ENCODE measurements at regions of chr12 and their contacts with region 1.

Region 1: DNA sequence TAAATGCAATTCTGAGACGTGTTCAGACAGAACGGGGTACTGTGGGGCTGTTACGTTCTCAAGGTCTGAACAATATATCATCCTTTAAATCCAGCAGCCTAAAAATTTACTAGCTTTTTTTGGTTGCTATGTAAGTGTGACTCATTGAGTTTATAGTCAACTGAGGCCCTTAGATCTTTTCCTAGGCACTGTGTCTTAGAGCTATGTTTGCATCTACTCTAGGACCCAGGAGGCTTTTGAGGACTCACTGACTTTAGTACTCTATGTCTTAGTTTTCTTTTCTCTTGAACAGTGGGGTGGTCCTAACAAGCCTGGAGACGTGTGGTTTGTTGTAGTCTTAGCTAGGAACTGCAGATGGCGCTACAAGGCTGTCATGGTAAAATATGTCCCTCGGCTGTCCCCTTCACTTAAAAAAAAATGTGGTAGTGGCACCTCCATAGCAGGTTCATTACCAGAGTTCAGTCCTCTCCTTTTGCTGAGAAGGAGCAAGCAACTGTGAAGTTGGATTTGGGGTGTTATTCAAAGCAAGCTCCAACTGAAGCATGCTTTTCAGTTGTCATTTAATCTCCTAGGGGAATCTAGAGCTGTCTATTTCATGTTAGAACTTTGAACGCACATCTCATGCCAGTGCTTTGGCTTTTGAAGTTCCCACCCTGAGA is 8.7 kb upstream of the SPATS2 start:
- H3K4me3 ChIP-seq: no peak overlapping the region
- H3K27ac ChIP-seq: no peak overlapping the region
- H3K4me1 ChIP-seq: no peaks in the 10 kb centered on the region
- CTCF ChIP-seq: peak; percentile 78

Region 2: DNA sequence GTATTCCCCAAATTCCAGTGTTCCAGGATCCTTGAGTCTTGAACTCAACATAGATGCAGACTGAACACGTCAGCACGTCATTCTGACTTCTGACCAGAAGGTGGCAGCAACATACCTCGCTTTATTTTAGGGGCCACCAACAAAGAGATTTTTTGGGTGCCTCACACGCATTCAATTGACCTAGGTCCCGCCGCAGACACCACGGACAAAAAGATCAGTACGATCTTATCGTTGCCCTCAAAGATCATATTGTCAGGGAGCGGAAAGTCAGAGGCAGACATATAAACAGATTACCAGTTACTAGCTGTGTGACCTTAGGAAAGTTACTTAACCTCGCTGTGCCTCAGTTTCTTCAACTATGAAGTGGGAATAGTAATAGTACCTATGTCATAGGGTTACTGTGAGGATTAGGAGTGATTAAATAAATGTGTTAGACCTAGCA is 70.2 kb before region 1 on chr12:
- CTCF ChIA-PET with region 1: interaction called, 112 read pairs
- POLR2A ChIA-PET with region 1: interaction called, 5 read pairs
- H3K4me3 ChIP-seq: no peak overlapping the region
- H3K27ac ChIP-seq: no peak overlapping the region
- H3K4me1 ChIP-seq: no peaks in the 10 kb centered on the region
- CTCF ChIP-seq: peak; percentile 89

Region 3: DNA sequence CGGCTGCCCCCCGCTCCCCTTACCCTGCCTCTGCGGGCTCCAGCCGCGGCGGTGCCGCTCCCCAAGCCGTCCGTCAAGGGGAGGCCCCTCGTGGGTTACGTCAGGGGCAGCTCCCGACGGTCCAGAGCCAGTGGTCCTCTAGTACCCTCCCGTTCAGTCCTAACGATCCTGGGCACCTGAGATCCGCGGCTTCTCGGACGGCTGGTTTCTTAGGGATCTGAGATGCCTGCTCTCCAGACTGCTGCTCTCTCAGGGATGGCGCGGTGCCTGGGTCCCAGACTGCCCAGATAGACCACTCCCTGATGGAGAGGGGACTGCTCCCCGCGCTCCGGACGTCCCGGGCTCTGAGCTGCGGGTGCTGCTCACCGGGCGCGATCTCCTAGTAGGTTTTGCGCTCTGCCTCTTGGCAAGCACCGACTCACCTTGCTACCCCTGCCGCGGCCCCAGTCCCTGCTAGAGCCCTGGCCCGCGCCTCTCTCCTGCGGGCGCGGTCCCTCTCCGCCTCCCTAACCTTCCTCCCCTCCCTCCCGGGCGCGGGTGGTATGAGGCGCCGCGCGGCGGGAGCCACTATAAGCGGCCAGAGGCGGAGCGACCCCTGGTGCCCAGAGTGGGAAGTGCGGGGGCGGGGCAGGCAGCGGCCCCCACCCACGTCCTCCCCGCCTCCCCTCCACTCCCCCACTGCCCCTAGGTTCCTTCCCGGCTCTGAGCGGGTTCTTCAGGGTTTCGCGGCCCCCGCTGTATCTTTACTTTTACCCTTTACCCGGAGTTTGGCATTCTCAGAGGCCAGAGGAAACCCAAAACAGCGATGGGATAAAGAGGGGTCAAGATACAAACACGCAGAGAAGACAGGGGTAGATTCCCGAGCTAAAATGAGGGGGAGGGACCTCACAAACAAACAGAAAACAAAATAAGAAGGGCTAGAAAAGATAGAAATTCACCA is 21.7 kb before region 1 on chr12 and contains the start of gene C1QL4:
- CTCF ChIA-PET with region 1: interaction called, 99 read pairs
- POLR2A ChIA-PET with region 1: interaction called, 7 read pairs
- H3K4me3 ChIP-seq: peak within 1 kb of the TSS; percentile 49
- H3K27ac ChIP-seq: no peak within 1 kb of the TSS; the same call in 1 of the 2 replicates
- H3K4me1 ChIP-seq: peaks cover 9% of the 10 kb centered on the region; the same call in 1 of the 2 replicates
- CTCF ChIP-seq: peak; percentile 85

Region 4: DNA sequence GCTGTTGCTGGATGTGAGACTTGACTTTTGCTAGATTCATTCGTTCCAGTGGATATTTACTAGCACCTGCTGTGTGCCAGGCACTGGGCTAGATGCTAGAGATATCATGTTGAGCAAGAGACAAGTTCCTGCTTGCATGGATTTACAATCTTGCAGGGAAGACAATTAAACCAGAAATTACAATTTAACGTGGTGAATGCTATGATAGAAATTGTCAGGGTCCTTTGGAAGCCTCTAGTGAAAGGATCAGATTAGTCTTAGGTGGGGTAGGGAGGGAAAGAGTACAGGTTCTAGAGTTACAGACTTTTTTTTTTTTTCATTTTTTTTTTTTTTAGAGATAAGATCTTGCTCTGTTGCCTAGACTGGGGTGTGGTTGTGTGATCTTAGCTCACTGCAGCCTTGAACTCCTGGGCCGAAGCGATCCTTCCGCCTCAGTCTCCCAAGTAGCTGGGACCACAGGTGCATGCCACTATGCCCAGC is 45.4 kb after region 1 on chr12:
- CTCF ChIA-PET with region 1: interaction called, 11 read pairs
- POLR2A ChIA-PET with region 1: no interaction called
- H3K4me3 ChIP-seq: no peak overlapping the region
- H3K27ac ChIP-seq: no peak overlapping the region
- H3K4me1 ChIP-seq: no peaks in the 10 kb centered on the region
- CTCF ChIP-seq: no peak

Region 5: DNA sequence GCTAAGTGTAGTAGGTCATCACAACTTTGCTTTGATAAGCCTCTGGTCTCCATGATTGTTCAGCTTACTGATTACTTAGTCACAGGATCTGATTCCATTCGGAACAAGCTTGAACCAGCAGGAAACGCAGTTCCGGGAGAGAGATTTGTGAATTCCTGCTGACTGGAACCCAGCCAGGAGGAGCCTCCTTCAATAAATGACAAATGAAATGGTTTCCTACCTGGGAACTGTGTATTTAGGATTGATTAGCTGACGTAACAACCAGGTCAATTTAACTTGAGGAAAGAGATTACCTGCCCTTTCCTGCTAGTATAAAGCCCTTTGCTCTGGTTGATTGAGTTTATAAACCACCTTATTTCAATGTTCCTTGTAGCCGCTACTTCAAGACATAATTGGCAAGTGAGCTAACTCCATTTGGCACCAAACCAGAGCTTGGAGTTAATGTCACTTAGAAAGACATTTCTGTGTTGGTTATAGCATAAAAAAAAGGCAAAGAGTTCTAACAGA is 145.1 kb after region 1 on chr12:
- CTCF ChIA-PET with region 1: interaction called, 517 read pairs
- POLR2A ChIA-PET with region 1: interaction called, 4 read pairs
- H3K4me3 ChIP-seq: no peak overlapping the region
- H3K27ac ChIP-seq: 0 out of 2 replicates have a peak overlapping the region, but pooled peaks have one; percentile 16
- H3K4me1 ChIP-seq: no peaks in the 10 kb centered on the region; the same call in 1 of the 2 replicates
- CTCF ChIP-seq: no peak

Region 6: DNA sequence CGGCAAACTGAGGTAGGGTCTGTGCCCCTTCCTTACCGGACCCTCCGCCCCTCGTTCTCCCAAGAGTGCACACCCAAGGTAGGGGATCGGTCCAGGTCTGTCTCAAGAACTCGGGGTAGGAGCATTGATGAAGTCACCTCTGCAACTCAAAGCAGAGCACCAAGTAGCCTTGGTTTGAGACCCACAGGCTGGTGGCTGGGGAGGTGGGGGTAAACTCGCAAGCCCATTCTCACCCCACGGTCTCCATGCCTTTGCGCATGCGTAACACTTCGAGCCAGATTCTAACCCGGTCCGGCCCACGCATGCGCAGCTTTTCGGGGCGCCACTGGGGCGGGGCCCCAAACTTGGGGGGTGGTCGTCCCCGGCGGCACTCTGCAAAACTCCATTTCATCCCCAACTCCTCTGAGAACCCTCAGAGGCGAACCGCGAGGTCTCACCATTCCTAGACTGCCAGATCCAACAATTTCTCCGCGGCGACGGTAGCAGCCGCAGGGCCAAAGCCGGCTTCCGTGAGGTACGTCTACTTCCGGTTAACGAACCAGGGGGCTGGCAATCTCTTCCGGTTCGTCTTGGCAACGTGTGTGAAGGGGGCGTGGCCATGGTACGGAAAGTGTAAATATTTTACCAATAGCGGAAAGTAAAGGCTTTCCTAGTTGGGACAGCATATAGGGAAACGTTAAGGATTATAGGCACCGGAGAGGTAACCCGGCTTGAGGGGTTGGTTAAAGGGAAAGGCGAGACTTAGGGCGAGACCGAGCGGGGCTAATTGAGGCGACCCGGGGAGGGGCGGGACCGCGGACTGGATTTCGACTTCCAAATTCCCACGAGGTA is 209.2 kb after region 1 on chr12 and contains the start of gene MCRS1:
- CTCF ChIA-PET with region 1: interaction called, 11 read pairs
- POLR2A ChIA-PET with region 1: no interaction called
- H3K4me3 ChIP-seq: peak within 1 kb of the TSS; percentile 88
- H3K27ac ChIP-seq: peak within 1 kb of the TSS; percentile 69
- H3K4me1 ChIP-seq: no peaks in the 10 kb centered on the region
- CTCF ChIP-seq: no peak